Activated CD8-positive, alpha-beta memory T cell treated with anti-CD3 and anti-CD28 coated beads, Interleukin-2, amount 10 ng/mL, durations not matched to agents 7 days and 5 days (primary cell): ENCODE measurements at regions of chr1 and their contacts with region 1.

Region 1: GRCh38 chr1:156813750-156814570 is 2.7 kb downstream of the SH2D2A start:
- DNase-seq: peak; percentile 82
- ATAC-seq: peak; percentile 44
- H3K4me3 Mint-ChIP-seq: peak overlapping the region; percentile 95
- H3K27ac Mint-ChIP-seq: peak overlapping the region; percentile 100
- H3K4me1 Mint-ChIP-seq: peaks cover 71% of the 10 kb centered on the region
- H3K27me3 Mint-ChIP-seq: no peaks in the 10 kb centered on the region

Region 2: DNA sequence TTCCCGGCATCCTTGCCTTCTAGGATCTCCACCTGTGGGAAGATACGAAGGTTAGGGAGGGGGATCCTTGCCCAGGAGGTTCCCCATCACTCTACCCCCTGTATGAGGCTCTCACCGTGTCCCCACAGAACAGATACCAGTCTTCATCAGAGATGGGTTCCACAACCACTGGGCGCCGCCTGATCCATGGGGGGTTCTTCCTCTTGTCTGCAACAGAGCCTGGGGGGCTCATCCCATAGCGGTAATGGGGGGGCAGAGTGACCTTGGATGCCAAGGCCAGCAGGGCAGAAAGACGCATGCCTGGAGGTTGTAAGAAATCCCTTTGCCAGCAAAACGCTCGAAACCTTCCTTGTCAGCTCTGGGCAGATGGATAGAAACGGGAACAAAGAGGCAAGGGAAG is 75.6 kb before region 1 on chr1:
- CTCF ChIA-PET with region 1: no interaction called
- DNase-seq: no peak
- ATAC-seq: no peak
- H3K4me3 Mint-ChIP-seq: no peak overlapping the region
- H3K27ac Mint-ChIP-seq: peak overlapping the region; percentile 26
- H3K4me1 Mint-ChIP-seq: peaks cover 40% of the 10 kb centered on the region
- H3K27me3 Mint-ChIP-seq: no peaks in the 10 kb centered on the region

Region 3: DNA sequence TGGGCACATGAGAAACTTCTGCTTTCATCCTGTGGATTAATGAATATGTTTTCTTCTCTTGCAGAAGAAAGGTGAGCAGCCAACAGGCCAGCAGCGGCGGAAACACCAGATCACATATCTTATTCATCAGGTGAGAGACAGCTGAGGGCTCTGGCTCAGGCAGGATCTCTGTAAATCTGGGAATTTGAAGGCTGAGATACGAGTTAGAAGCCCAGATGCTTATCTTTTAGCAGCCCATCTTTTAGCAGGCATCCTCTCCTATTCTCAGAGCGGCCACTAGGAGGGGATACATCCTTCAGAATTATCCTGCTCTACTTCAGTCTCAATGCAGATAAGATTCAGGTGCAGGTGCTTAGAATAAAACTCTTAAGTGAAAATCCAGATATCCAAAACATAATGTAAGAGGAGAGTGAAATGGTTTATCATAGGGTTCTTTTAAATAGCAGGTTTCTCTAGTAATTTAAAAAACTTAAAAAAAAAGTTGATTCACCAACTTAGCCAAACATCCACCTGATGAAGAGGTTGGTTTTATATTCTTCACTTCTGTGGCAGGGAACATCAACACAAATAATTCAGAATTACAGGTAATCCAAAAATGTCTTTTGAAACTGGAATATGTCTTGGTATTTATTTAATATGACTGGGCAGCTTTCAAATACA is 16.6 kb before region 1 on chr1:
- CTCF ChIA-PET with region 1: interaction called, 15 read pairs
- DNase-seq: peak; percentile 76
- ATAC-seq: peak; percentile 77
- H3K4me3 Mint-ChIP-seq: no peak overlapping the region
- H3K27ac Mint-ChIP-seq: peak overlapping the region; percentile 10
- H3K4me1 Mint-ChIP-seq: peaks cover 30% of the 10 kb centered on the region
- H3K27me3 Mint-ChIP-seq: no peaks in the 10 kb centered on the region

Region 4: DNA sequence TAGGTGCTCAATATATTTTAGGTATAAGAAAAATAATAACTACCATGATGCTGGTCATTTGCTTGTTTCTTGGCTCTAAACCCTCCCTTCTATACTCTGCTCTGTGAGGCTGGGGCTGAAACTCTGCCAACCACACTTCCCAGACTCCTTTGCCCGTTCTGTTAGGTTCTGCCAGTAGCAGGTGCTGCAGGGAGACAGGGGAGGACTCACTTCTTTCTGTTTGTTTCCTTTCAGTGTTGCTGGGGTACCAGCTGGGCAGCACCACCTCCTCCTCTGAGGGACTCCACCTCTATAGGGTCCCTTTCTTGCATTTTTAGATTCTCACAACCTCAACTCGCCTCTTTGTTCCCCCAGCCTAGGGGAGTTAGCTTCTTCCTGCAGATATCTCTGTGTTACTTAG is 19.6 kb after region 1 on chr1:
- CTCF ChIA-PET with region 1: interaction called, 48 read pairs
- DNase-seq: no peak
- ATAC-seq: peak; percentile 50
- H3K4me3 Mint-ChIP-seq: no peak overlapping the region
- H3K27ac Mint-ChIP-seq: no peak overlapping the region
- H3K4me1 Mint-ChIP-seq: peaks cover 38% of the 10 kb centered on the region
- H3K27me3 Mint-ChIP-seq: peaks cover 9% of the 10 kb centered on the region